Activated CD4-positive, alpha-beta T cell treated with anti-CD3 and anti-CD28 coated beads for 36 hours (primary cell): ENCODE measurements at regions of chr6 and their contacts with region 1.

Region 1: GRCh38 chr6:96837081-96837971 is at the start of gene GPR63:
- DNase-seq: peak; percentile 88
- ATAC-seq: peak; percentile 99
- H3K4me3 Mint-ChIP-seq: peak within 1 kb of the TSS; percentile 86
- H3K27ac Mint-ChIP-seq: peak within 1 kb of the TSS; percentile 65
- H3K4me1 Mint-ChIP-seq: peaks cover 17% of the 10 kb centered on the region
- H3K27me3 Mint-ChIP-seq: peaks cover 32% of the 10 kb centered on the region
- total RNA-seq, gene GPR63: 1.2 to 1.3 TPM

Region 2: DNA sequence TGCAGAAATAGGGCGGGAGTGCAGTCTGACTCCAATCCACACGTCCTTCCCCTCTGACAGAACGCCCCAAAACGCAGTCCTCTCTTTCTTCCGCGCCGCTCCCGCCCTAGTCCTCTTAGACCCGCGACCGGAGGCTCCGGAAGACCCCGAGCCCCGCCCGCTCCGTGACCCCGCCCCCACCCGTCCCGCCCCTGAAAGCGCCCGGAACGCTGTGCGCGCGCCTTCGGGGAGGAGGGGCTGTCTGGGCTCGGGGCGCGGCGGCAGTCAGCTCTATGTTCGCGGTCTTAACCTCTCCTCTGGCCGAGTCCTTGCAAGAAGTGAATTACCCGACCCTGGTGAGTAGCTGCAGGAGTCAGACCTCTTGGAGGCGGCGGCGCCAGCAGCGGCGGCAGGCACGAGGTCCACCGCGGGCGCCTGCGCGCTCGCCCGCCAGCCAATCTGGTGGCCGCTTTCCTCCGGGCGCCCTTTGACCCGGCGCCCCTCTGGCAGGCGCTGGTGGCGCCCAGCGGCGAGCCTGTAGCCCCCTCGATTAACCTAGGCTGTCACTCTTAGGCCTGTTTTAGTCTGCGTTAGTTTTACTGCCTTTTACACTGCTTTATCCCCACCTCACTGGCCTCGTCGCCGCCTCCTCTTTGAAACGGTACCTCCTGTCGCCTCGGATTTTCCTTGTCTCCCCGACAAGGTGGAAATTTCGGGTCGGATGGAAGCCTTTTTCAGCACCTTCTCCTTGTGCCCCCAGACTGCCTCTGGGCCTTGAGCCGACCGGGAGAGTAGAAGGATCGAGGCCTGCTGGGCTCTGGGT is 1259.8 kb before region 1 on chr6 and contains the start of gene MANEA:
- CTCF ChIA-PET with region 1: no interaction called
- POLR2A ChIA-PET with region 1: no interaction called
- intact Hi-C with region 1: loop called in 1 of 2 experiments (anchors 2 kb)
- DNase-seq: peak; percentile 92
- ATAC-seq: peak; percentile 92
- H3K4me3 Mint-ChIP-seq: peak within 1 kb of the TSS; percentile 81
- H3K27ac Mint-ChIP-seq: peak within 1 kb of the TSS; percentile 98
- H3K4me1 Mint-ChIP-seq: peaks cover 31% of the 10 kb centered on the region
- H3K27me3 Mint-ChIP-seq: no peaks in the 10 kb centered on the region
- total RNA-seq, gene MANEA: 19.6 to 22.4 TPM

Region 3: GRCh38 chr6:96186521-96187222 is 650.7 kb before region 1 on chr6:
- CTCF ChIA-PET with region 1: no interaction called
- POLR2A ChIA-PET with region 1: no interaction called
- intact Hi-C with region 1: no loop called
- DNase-seq: no peak
- ATAC-seq: no peak
- H3K4me3 Mint-ChIP-seq: no peak overlapping the region
- H3K27ac Mint-ChIP-seq: no peak overlapping the region
- H3K4me1 Mint-ChIP-seq: no peaks in the 10 kb centered on the region
- H3K27me3 Mint-ChIP-seq: peaks cover 2% of the 10 kb centered on the region

Region 4: DNA sequence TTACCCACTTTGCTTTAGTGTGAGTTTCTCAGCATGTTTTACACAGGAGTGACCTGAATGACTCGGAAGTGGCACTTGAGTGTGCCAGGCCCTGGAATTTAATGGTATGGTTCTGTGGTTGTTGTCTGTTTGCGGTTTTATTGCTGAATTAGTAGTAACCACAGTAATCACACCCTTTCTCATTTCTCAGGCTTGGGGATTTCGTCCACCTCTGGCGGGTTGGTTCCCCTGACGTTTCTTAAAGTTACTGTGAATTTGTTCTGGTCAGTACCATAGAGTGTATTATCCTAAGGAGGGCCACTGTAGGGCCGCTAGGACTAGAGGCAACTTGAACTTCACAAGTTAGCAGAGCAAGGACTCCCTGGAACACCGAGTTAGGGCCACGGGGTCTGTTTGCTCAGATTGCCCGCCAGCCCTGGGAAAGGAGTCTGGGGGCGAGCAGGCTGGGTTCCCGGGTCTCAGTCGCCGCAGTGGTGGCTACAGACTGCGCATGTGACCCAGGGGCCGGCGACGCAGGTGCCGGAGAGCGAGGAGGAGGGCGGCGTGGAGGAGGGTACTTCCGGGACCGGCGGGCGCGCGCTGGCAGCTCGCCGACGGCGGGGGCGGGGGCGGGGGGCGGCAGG is 86.7 kb after region 1 on chr6:
- CTCF ChIA-PET with region 1: no interaction called
- POLR2A ChIA-PET with region 1: no interaction called
- intact Hi-C with region 1: loop called (anchors 1 kb)
- DNase-seq: no peak
- ATAC-seq: peak; percentile 62
- H3K4me3 Mint-ChIP-seq: peak overlapping the region; percentile 88
- H3K27ac Mint-ChIP-seq: peak overlapping the region; percentile 81
- H3K4me1 Mint-ChIP-seq: peaks cover 28% of the 10 kb centered on the region
- H3K27me3 Mint-ChIP-seq: no peaks in the 10 kb centered on the region

Region 5: DNA sequence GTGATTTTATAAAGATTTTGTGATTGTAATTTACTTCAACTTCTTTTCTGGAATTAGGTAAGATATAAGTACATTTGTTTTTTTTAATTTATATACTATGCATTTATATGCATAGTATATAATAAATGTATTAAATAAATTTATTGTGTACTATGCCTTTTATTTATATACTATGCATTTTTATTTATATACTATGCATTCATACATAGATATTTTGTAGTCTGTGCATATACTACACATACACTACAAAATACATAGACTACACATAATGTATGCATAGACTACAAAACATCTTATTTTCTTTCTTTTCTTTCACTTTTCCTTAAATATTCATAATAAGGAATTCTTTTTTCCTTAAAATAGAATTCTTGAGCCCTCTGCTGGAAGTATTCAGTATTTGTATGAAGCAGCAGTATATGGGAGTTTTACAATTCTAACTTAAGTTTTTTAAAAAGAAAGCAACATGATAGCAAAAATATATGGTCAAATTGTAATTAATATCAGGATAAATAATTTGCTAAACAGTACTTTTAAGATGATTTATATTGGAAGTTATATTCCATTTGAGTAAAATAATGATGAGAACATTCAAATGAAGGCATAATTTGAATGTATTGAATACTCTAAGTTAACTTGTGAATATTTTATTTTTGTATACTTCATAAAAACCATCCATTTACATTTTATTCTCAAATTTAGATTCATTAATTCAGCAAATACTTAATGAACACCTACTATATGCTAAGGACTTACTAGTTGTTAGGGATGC is 216.5 kb after region 1 on chr6:
- CTCF ChIA-PET with region 1: no interaction called
- POLR2A ChIA-PET with region 1: no interaction called
- intact Hi-C with region 1: loop called (anchors 2 to 10 kb)
- DNase-seq: no peak
- ATAC-seq: no peak
- H3K4me3 Mint-ChIP-seq: no peak overlapping the region
- H3K27ac Mint-ChIP-seq: no peak overlapping the region
- H3K4me1 Mint-ChIP-seq: peaks cover 15% of the 10 kb centered on the region
- H3K27me3 Mint-ChIP-seq: no peaks in the 10 kb centered on the region